ENCODE measurements at regions of chr19 and their contacts with region 1.

Region 1: GRCh38 chr19:1998712-1999708 is 16.5 kb downstream of the BTBD2 start:
- DNase-seq: no peak
- ATAC-seq: no peak

Region 2: DNA sequence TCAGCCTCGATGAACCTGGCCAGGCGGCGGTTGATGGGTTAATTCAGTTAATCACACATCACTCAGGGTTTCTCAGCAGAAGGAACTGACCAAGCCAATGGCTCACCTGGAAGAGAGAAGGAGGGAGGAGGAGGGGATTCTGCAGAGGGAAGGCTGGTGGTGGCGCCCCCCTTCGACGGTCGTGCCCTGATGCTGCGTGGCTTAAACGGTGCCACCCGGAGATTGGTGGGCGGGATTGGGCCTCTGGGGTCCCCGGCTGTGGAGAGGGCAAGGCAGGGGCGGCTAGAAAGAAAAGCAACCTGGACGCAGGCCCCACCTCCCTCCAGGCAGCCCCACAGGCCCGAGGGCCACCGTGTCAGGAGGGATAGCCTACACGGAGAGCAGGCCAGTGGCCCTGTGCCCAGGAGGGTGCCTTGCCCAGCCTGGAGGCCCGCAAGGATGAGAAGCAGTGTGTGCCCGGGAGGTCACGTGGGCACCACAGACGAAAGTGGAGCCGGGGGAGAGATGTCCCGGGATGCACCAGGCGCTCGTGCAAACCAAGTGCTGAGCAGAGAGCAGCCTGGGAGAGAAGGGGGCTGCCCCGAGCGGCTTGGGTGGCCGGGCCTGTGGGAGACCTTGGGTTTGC is 42.0 kb before region 1 on chr19:
- intact Hi-C with region 1: loop called in 1 of 2 experiments (anchors 5 kb)
- DNase-seq: no peak
- ATAC-seq: peak; percentile 14 to 70

Region 3: DNA sequence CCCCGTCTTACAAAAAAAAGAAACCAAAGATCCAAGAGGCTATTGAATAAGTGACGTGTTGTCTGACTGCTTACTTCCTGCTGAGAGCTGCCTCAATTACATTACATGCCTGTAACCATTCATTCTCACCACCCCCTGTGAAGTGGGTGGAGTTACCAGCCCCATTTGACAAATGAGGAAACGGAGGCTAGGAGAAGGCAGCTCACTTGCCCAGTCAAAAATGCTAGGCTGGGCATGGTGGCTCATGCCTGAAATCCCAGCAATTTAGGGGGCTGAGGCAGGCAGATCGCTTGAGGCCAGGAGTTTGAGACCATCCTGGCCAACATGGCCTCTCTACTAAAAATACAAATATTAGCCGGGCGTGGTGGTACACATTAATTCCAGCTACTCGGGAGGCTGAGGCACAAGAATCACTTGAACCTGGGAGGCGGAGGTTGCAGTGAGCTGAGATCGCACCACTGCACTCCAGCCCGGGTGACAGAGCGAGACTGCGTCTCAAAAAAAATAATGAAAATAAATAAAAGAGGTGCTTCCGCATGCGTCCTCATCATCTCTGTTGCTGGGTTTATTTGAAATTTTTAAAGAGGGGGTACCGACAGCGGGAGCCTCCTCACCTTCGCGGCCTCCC is 328.9 kb after region 1 on chr19:
- intact Hi-C with region 1: no loop called
- DNase-seq: no peak
- ATAC-seq: peak; percentile 19 to 58

Measured in left cardiac atrium (tissue), 4 donors.